ENCODE measurements at regions of chr7 and their contacts with region 1.

Region 1: DNA sequence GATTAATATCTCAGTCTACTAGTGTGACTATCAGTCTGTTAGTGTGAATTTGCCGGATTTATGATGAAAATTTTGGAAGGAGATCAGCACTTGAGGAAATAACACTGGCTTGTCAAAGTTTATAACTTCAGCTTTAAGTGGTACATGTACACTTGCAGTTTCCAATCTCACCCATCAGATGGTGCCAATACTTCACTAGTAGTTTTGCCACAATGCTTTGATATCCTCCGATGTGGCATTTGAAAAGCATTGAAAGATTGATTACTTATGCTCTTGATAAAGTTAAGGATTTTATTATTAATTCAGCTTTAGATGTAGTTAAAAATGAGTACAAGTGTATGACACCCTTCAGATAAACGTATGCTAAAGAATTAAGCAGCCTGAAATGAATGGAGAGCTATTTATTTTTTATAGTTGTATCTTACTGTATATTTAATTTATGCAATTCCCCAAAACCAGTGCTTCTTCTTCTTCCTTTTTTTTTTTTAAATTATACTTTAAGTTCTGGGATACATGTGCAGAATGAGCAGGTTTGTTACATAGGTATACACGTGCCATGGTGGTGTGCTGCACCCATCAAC is 98.2 kb downstream of the ANLN start:
- ATAC-seq: peak in 6 of 8 experiments; percentile 29 to 51 (median 44)
- H3K4me3 ChIP-seq: no peak overlapping the region
- H3K27ac ChIP-seq: no peak overlapping the region
- H3K4me1 ChIP-seq: no peaks in the 10 kb centered on the region

Region 2: DNA sequence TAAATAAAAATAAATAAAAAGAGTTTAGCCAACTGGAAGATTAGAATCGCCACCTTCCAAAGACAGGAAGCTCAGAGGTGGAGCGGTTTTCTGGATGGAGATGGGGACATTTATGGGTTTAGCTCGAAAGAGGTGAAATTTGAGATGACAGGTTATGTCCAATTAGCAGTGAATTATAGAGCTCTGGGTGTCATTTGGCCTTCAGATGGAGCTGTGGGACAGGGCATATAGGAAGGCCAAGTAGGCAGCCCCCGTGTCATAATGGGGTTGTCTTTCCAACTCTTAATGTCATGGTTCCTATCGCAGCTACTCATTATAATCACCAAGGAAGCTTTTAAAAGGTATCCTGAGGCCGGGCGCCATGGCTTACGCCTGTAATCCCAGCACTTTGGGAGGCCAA is 355.8 kb before region 1 on chr7:
- in situ Hi-C with region 1: no loop called
- ATAC-seq: no peak
- H3K4me3 ChIP-seq: no peak overlapping the region
- H3K27ac ChIP-seq: no peak overlapping the region
- H3K4me1 ChIP-seq: no peaks in the 10 kb centered on the region

Region 3: DNA sequence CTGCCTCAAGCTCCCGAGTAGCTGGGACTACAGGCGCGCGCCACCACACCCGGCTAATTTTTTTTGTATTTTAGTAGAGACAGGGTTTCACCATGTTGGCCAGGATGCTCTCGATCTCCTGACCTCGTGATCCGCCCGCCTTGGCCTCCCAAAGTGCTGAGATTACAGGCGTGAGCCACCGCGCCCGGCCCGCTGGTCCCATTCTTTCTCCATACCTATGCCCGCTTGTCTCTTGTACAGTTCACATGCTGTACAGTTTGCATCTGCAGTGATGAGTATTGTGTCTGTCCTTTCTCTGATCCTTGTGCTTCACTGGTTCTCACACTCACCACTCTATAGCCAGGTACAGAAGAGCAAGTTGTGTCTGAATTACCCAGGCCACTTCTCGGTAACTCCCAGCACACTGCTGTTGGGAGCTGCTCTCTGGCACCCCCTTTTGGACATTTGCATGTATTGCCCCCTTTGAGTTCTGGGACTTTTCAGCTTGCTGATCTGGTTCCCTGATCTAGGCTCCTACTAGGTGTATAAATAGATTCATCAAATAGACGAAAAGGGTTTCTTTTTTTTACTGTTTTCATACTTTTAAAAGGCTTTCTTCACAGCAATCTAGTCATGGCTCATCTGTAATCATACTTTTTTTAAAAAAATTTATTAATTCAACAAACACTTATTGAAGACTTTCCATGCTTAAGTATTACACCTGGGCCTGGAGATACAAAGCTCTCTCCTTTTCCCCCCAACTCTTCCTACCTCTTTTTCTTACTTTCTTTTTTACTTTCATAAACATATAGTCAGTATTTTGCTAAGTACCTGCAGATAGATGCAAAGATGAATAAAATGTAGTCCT is 183.0 kb after region 1 on chr7:
- in situ Hi-C with region 1: loop called in 3 of 9 experiments (anchors 25 kb)
- ATAC-seq: peak in 7 of 8 experiments; percentile 32 to 80 (median 64)
- H3K4me3 ChIP-seq: no peak overlapping the region
- H3K27ac ChIP-seq: no peak overlapping the region
- H3K4me1 ChIP-seq: peaks cover 0 to 9% of the 10 kb centered on the region in 2 donors

Region 4: DNA sequence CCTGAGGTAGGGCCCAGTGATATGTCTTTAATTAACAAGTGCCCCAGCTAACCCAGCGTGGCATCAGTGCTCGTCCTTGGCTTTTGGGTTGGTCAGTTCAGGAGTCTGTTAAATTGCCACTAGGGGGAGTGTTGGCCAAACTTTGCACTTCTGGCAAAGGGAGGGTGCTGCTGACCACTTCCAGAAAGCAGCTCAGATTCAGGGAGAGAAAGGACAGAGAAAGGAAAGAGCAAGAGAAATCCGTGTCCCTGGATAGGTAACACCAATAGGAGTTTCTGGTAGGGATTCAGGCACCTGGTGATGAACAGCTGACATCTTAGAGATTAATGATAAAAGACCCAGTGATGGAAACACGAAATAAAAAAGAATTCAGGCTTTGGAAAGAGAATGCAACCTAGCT is 479.5 kb after region 1 on chr7:
- in situ Hi-C with region 1: loop called in 2 of 9 experiments (anchors 25 kb)
- ATAC-seq: peak; percentile 78 to 98 (median 94)
- H3K4me3 ChIP-seq: no peak overlapping the region
- H3K27ac ChIP-seq: no peak overlapping the region
- H3K4me1 ChIP-seq: peaks cover 41 to 50% of the 10 kb centered on the region in 2 donors

Region 5: DNA sequence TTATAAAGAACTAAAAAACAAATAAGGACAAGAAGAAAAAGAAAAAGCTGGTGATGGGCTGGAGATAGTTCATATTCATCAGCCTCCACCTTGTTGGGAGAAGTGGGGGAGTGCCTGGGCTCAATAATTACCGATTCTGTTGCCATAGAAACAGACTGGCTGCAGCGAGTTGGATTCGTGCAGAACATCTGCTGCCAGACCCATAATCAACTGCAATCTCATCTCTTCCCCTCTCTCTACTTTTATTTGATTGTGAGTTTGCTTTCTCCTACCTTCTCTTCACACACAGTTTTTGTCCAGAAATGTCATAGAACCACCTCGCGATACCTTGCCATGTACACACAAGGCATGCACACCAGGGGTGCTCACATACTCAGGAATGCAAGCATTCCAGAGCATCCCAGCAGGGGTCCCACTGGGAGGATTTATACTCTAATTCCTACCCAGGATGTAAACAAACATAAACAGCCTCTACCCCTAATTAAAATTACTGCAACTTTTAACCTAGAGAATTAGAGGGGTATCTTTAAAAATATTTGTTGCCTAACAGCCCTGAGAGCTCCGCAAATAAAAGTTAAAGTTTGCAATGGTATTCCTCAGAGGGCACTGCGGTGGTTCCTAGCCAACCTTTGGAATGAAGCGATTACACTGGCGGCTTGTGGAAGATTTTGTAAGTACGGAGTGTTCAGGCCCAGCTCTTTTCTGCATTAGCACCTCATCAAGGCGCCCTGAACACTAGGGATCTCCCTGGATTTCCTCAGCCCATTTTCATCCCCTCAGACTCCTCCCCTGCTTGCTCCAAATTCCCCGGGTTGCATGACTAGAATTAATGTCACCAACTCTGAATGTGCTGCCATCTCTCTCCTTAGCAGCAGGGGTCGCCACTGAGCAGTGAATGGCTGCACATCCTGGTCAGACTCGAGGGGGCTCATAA is 498.9 kb after region 1 on chr7:
- in situ Hi-C with region 1: loop called in 1 of 9 experiments (anchors 25 kb)
- ATAC-seq: peak; percentile 44 to 74 (median 58)
- H3K4me3 ChIP-seq: peak overlapping the region in 4 of 5 donors; percentile 33 to 44 (median 39)
- H3K27ac ChIP-seq: peak overlapping the region; percentile 45 to 72
- H3K4me1 ChIP-seq: peaks cover 40 to 49% of the 10 kb centered on the region in 2 donors

Measured in motor neuron (in vitro differentiated cells).